Activated CD4-positive, alpha-beta memory T cell treated with anti-CD3 and anti-CD28 coated beads, Interleukin-2, amount 10 ng/mL, durations not matched to agents 7 days and 5 days (primary cell): ENCODE measurements at regions of chr9 and their contacts with region 1.

Region 1: GRCh38 chr9:69180670-69181069 is 6.6 kb downstream of the TJP2 start:
- DNase-seq: peak; percentile 81
- H3K4me3 Mint-ChIP-seq: peak overlapping the region; percentile 38
- H3K27ac Mint-ChIP-seq: peak overlapping the region; percentile 86
- H3K4me1 Mint-ChIP-seq: peaks cover 64% of the 10 kb centered on the region
- H3K27me3 Mint-ChIP-seq: no peaks in the 10 kb centered on the region

Region 2: GRCh38 chr9:69056191-69056815 is 124.4 kb before region 1 on chr9:
- CTCF ChIA-PET with region 1: interaction called, 11 read pairs
- POLR2A ChIA-PET with region 1: interaction called, 4 read pairs
- DNase-seq: no peak
- H3K4me3 Mint-ChIP-seq: no peak overlapping the region
- H3K27ac Mint-ChIP-seq: no peak overlapping the region
- H3K4me1 Mint-ChIP-seq: peaks cover 18% of the 10 kb centered on the region
- H3K27me3 Mint-ChIP-seq: no peaks in the 10 kb centered on the region

Region 3: GRCh38 chr9:69168709-69169217 is 11.9 kb before region 1 on chr9:
- CTCF ChIA-PET with region 1: interaction called, 26 read pairs
- POLR2A ChIA-PET with region 1: interaction called, 23 read pairs
- DNase-seq: peak; percentile 76
- H3K4me3 Mint-ChIP-seq: peak overlapping the region; percentile 68
- H3K27ac Mint-ChIP-seq: peak overlapping the region; percentile 72
- H3K4me1 Mint-ChIP-seq: peaks cover 36% of the 10 kb centered on the region
- H3K27me3 Mint-ChIP-seq: peaks cover 12% of the 10 kb centered on the region